ENCODE measurements at regions of chr6 and their contacts with region 1.

Region 1: DNA sequence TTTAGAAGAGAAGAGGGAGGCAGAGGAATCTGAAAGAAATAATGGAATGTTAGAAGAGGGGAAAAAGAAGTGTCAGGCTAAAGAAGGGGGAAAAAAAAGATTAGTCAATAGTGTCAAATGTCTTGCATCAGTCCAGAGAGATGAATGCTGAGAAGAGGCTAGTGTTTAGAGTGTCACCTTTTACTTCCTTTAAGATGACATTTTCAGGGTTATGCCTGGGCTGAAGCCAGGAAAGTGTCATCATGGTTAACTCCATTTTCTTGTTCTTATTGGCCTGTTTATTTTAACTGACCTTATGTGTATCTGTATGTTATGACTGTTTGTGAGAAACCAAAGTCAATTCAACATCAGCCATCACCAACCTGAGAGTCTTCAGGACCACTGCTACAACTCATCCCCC is 15.0 kb upstream of the BCKDHB start:
- DNase-seq: no peak
- H3K4me3 Mint-ChIP-seq: no peak overlapping the region
- H3K27ac Mint-ChIP-seq: no peak overlapping the region
- H3K4me1 Mint-ChIP-seq: peaks cover 10% of the 10 kb centered on the region
- H3K27me3 Mint-ChIP-seq: peaks cover 13% of the 10 kb centered on the region

Region 2: GRCh38 chr6:79868098-79868722 is 223.3 kb before region 1 on chr6:
- CTCF ChIA-PET with region 1: interaction called, 10 read pairs
- POLR2A ChIA-PET with region 1: no interaction called
- DNase-seq: peak; percentile 62
- H3K4me3 Mint-ChIP-seq: no peak overlapping the region
- H3K27ac Mint-ChIP-seq: no peak overlapping the region
- H3K4me1 Mint-ChIP-seq: peaks cover 11% of the 10 kb centered on the region
- H3K27me3 Mint-ChIP-seq: peaks cover 8% of the 10 kb centered on the region

Region 3: DNA sequence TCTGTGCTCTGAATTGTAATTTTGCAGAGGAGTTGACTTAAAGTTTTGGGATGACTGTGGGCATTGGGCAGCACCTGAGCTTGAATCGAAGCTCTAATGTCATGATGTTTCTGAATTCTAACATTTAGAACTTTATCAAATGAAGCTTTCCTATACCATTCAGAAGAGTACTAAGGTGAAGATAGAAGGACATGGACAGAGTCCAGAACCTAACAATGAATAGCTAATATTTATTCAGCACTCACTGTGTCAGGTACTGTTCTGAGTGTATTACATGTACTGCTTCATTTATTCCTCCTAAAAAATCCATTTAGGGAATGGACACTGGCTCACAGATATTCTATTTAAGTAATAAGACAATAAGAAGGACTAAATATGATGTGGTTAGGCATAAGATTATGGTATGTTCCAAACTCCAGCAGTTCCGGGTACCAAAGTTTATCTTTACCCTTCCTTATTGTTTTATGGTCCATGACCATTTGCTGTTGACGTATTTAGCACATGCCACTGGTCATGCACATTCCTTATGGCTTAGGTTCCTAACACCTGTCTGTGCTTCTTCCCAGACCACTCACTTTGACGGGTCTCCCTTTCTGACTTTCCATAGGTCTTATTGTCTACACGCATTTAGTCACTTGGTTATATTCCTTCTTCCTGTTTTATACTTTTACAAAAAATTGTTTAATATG is 35.3 kb after region 1 on chr6:
- CTCF ChIA-PET with region 1: no interaction called
- POLR2A ChIA-PET with region 1: no interaction called
- DNase-seq: no peak
- H3K4me3 Mint-ChIP-seq: no peak overlapping the region
- H3K27ac Mint-ChIP-seq: no peak overlapping the region
- H3K4me1 Mint-ChIP-seq: no peaks in the 10 kb centered on the region
- H3K27me3 Mint-ChIP-seq: no peaks in the 10 kb centered on the region